ENCODE measurements at regions of chr1 and their contacts with region 1.

Region 1: DNA sequence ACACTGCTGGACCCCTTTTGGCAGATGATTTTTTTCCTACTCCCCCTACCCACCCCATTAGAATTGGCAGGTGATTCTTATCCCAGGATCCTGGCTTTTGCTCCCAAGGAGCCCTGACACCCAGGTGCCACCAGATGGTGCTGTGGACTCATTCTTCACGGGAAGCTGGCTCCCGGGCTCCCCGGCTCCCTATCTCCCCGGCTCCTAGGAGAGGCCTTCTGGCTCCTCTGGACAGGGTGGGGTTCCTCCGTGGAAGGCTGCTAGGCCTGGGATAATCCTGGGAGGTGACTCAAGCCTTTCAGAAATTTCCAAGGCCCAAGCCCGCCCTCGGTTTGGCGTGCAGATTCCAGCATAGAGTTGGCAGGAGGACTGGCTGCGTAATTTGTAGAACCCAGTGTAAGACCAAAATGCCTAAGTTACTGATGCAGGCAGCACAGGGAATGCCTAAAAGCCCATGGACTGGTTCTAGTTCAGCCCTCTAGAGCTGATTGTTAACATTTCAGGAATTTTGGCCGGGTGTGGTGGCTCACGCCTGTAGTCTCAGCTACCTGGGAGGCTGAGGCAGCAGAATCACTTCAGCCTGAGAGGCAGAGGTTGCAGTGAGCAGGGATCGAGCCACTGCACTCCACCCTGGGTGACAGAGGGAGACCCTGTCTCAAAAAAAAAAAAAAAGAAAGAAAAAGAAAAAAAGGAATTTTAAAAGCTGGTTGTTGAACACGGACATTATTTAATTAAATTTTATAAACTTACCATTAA is 6.8 kb upstream of the BSDC1 start:
- DNase-seq: peak; percentile 65
- H3K4me3 ChIP-seq: no peak overlapping the region
- H3K27ac ChIP-seq: no peak overlapping the region
- H3K4me1 ChIP-seq: no peaks in the 10 kb centered on the region
- H3K27me3 ChIP-seq: no peaks in the 10 kb centered on the region
- CTCF ChIP-seq: peak; percentile 88 to 90
- POLR2A ChIP-seq: no peak

Region 2: GRCh38 chr1:32413507-32414185 is 12.6 kb after region 1 on chr1:
- CTCF ChIA-PET with region 1: interaction called, 64 read pairs
- POLR2A ChIA-PET with region 1: no interaction called
- dilution Hi-C with region 1: no loop called
- intact Hi-C with region 1: loop called (anchors 1 kb)
- DNase-seq: peak; percentile 63
- H3K4me3 ChIP-seq: no peak overlapping the region
- H3K27ac ChIP-seq: no peak overlapping the region
- H3K4me1 ChIP-seq: no peaks in the 10 kb centered on the region
- H3K27me3 ChIP-seq: peaks cover 9 to 10% of the 10 kb centered on the region in 2 experiments
- CTCF ChIP-seq: peak; percentile 72 to 83
- POLR2A ChIP-seq: no peak

Region 3: GRCh38 chr1:32470991-32471694 is 70.1 kb after region 1 on chr1:
- CTCF ChIA-PET with region 1: interaction called, 10 read pairs
- POLR2A ChIA-PET with region 1: no interaction called
- dilution Hi-C with region 1: no loop called
- intact Hi-C with region 1: no loop called
- DNase-seq: no peak
- H3K4me3 ChIP-seq: no peak overlapping the region
- H3K27ac ChIP-seq: no peak overlapping the region
- H3K4me1 ChIP-seq: no peaks in the 10 kb centered on the region
- H3K27me3 ChIP-seq: peaks cover 3 to 12% of the 10 kb centered on the region in 2 experiments
- CTCF ChIP-seq: peak in 1 of 2 donors; percentile 47
- POLR2A ChIP-seq: no peak

Region 4: DNA sequence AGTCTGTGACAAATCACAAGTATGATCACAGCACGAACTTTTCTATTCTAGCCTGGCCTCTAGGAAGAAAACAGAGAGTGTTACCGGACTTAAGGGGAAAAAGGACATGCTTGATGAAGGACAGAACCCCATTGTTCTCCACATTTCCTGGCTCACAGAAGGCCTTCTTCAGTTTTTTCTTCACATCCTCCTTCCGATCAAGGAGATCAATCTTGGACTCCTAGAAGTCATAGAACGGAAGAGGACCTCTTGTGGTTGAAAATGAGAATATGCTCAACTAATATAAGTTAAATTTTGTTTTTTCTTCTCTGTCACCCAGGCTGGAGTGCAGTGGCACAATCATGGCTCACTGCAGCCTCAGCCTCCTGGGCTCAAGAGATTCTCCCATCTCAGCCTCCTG is 385.8 kb after region 1 on chr1:
- CTCF ChIA-PET with region 1: no interaction called
- POLR2A ChIA-PET with region 1: no interaction called
- dilution Hi-C with region 1: no loop called
- intact Hi-C with region 1: loop called (anchors 1 kb)
- DNase-seq: peak; percentile 65
- H3K4me3 ChIP-seq: no peak overlapping the region
- H3K27ac ChIP-seq: no peak overlapping the region
- H3K4me1 ChIP-seq: peaks cover 18% of the 10 kb centered on the region
- H3K27me3 ChIP-seq: no peaks in the 10 kb centered on the region
- CTCF ChIP-seq: peak; percentile 24 to 40
- POLR2A ChIP-seq: no peak